Transverse colon (tissue), 4 donors: ENCODE measurements at regions of chr2 and their contacts with region 1.

Region 1: DNA sequence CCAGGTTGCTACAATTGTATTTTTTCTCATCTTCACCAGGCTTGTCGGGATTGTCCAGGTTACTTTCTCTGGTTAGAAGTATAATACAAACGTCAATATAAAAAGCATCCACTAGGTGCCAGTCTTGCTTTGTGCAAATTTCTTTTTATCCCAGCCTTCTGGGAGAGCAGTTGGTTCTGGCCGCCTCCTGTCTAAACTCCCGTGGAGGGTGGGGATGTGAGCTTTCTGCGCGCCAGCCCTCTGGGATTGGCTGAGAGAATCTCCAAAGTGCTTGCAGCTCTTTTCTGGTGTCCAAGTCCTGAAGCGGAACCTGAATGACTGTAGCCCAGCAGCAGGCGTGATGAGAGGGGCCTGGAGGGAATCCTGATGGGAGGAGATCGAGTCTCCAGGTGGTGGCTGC is 22.4 kb upstream of the TOGARAM2 start:
- DNase-seq: peak; percentile 32
- H3K4me3 ChIP-seq: no peak overlapping the region
- H3K27ac ChIP-seq: no peak overlapping the region
- H3K4me1 ChIP-seq: peaks cover 0 to 13% (median 0%) of the 10 kb centered on the region in 4 donors
- H3K27me3 ChIP-seq: no peaks in the 10 kb centered on the region
- CTCF ChIP-seq: peak; percentile 63 to 84 (median 66)
- EP300 ChIP-seq: no peak
- POLR2A ChIP-seq: no peak

Region 2: DNA sequence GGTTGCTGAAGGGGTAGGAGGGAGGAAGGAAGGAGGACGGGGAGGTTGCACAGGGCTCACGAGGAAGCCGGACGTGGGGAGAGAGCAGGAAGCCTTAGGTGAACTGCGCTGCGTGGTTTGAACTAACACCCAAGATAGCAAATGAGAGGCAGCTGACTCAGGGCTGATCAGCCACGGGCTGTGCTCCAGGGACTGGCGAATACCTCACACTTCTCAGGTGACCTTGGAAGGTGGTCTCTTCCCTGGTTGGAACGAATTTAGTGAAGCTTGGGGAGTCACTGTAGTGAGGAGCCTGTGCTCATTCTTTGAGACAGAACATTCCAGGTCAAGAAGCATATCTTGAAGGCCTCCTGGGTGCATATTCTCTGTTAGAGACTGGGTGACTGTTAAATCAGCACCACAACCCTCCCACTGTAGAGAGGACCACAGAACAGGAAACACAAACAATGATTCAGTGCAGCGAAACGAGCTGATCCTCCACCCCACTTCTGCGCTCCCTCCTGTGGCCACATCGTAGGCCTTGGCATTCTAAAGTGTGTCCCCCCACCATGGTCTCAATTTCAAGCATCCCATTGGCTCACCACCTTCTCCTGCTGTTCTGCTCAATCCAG is 56.2 kb after region 1 on chr2:
- in situ Hi-C with region 1: no loop called
- intact Hi-C with region 1: loop called (anchors 10 kb)
- DNase-seq: peak; percentile 59
- H3K4me3 ChIP-seq: no peak overlapping the region
- H3K27ac ChIP-seq: peak overlapping the region in 3 of 4 donors; percentile 35 to 63 (median 60)
- H3K4me1 ChIP-seq: peaks cover 3 to 33% (median 15%) of the 10 kb centered on the region in 4 donors
- H3K27me3 ChIP-seq: no peaks in the 10 kb centered on the region
- CTCF ChIP-seq: no peak
- EP300 ChIP-seq: no peak
- POLR2A ChIP-seq: no peak

Region 3: GRCh38 chr2:29139152-29139551 is 180.5 kb after region 1 on chr2:
- in situ Hi-C with region 1: no loop called
- intact Hi-C with region 1: no loop called
- DNase-seq: no peak
- H3K4me3 ChIP-seq: no peak overlapping the region
- H3K27ac ChIP-seq: no peak overlapping the region
- H3K4me1 ChIP-seq: no peaks in the 10 kb centered on the region
- H3K27me3 ChIP-seq: no peaks in the 10 kb centered on the region
- CTCF ChIP-seq: no peak
- EP300 ChIP-seq: no peak
- POLR2A ChIP-seq: no peak

Region 4: GRCh38 chr2:29196792-29197788 is 238.4 kb after region 1 on chr2:
- in situ Hi-C with region 1: loop called in 3 of 4 experiments (anchors 5 to 10 kb)
- intact Hi-C with region 1: loop called (anchors 2 kb)
- DNase-seq: peak; percentile 75
- H3K4me3 ChIP-seq: no peak overlapping the region
- H3K27ac ChIP-seq: no peak overlapping the region
- H3K4me1 ChIP-seq: no peaks in the 10 kb centered on the region
- H3K27me3 ChIP-seq: no peaks in the 10 kb centered on the region
- CTCF ChIP-seq: peak; percentile 68 to 82 (median 74)
- EP300 ChIP-seq: no peak
- POLR2A ChIP-seq: no peak

Region 5: DNA sequence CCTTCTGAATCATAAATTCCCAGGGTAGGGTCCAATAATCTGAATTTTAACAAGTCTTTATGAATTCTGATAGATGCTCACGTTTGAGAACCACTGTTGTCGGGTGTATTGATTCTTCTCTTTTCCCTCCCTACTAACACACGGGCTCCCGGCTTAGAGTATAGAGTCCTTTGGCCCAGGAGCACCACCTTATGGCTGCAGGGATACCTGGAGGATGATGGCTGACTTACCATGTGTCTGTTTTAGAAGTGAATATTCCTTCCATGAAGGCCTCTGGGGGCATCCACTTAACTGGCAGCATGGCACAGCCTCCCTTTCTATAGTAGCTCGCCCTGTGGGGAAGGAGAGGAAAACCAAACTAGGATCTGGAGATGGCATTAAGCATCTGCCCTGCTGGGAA is 248.3 kb after region 1 on chr2:
- in situ Hi-C with region 1: loop called in 3 of 4 experiments (anchors 5 kb)
- intact Hi-C with region 1: no loop called
- DNase-seq: no peak
- H3K4me3 ChIP-seq: no peak overlapping the region
- H3K27ac ChIP-seq: no peak overlapping the region
- H3K4me1 ChIP-seq: no peaks in the 10 kb centered on the region
- H3K27me3 ChIP-seq: no peaks in the 10 kb centered on the region
- CTCF ChIP-seq: no peak
- EP300 ChIP-seq: no peak
- POLR2A ChIP-seq: no peak

Region 6: DNA sequence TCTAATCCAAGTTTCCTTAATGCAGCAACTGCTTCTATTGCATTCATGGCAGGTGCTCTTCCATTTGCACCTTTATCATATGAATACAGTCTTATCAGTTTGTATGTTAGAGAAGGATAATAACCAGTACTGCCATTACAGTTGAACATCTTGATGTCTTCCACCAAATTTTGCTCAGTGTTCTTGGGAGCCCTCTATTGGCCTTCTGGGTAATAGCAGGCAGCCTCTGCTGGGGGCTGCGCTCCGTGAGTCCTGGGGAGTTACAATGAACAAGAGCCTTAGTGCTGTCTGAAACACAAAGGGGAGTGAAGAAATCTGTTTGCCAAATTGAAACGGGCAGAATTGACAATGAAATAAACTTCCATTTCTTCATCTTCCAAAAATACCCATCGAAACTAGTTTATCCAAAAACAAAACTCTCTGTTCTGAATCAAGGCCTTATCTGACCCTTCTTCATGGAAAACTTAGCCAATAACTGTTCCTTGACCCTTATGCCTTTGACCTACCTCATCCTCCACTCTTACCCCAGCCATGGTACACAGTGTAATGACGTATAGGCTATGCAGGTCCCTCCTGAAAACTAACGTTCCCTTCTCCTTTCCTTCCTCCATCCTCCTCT is 882.8 kb after region 1 on chr2:
- in situ Hi-C with region 1: loop called in 3 of 4 experiments (anchors 25 kb)
- intact Hi-C with region 1: no loop called
- DNase-seq: no peak
- H3K4me3 ChIP-seq: no peak overlapping the region
- H3K27ac ChIP-seq: no peak overlapping the region
- H3K4me1 ChIP-seq: no peaks in the 10 kb centered on the region
- H3K27me3 ChIP-seq: no peaks in the 10 kb centered on the region
- CTCF ChIP-seq: peak; percentile 54 to 88 (median 79)
- EP300 ChIP-seq: no peak
- POLR2A ChIP-seq: no peak